ENCODE measurements at regions of chr12 and their contacts with region 1.

Region 1: DNA sequence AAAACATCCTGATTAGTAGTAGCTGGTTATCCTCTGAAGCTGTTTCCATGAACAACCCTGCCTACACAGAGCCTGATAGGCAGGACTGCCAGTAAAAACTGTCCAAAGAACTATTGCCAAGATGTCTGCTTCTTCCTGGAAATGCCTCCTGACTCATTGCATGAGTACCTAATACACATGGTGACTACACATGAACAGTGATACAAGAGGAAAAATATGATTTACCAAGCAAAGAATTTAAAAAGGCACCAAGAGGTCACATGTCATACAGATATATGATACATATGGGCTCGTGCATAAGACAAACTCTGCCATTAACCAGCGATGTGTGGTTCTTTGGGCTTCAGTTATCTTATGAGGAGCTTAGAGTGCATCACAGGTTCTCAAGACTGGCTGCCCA is 552.3 kb downstream of the SLC16A7 start:
- DNase-seq: peak; percentile 80
- H3K4me3 ChIP-seq: no peak overlapping the region
- H3K27ac ChIP-seq: peak overlapping the region; percentile 86
- H3K4me1 ChIP-seq: peaks cover 26% of the 10 kb centered on the region
- H3K27me3 ChIP-seq: no peaks in the 10 kb centered on the region
- CTCF ChIP-seq: no peak

Region 2: DNA sequence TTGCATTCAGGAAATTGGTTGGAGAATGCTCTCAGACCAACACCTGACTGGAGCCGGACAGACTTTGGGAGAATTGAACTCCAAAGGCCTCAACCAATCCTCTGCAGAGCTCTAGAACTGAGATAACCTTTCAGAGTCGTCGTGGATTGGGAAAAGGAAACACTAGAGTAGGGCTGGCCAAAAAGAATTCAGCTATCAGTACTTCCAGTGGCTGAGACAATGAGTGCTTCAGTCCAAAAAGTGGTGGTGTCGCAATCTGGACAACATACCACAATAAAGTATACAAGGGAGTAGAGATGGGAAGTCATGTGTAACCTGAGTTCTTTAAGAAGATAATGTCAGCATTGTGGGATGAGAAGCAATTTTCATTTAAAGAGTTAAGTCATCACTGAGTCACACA is 175.2 kb before region 1 on chr12:
- CTCF ChIA-PET with region 1: no interaction called
- dilution Hi-C with region 1: no loop called
- in situ Hi-C with region 1: no loop called
- intact Hi-C with region 1: loop called (anchors 1 kb)
- DNase-seq: peak; percentile 90
- H3K4me3 ChIP-seq: peak overlapping the region in 2 of 3 experiments; percentile 2 to 4
- H3K27ac ChIP-seq: peak overlapping the region; percentile 80
- H3K4me1 ChIP-seq: peaks cover 20% of the 10 kb centered on the region
- H3K27me3 ChIP-seq: no peaks in the 10 kb centered on the region
- CTCF ChIP-seq: no peak

Region 3: GRCh38 chr12:60194678-60195077 is 46.6 kb after region 1 on chr12:
- CTCF ChIA-PET with region 1: no interaction called
- dilution Hi-C with region 1: no loop called
- in situ Hi-C with region 1: no loop called
- intact Hi-C with region 1: loop called (anchors 5 kb)
- DNase-seq: peak; percentile 35
- H3K4me3 ChIP-seq: no peak overlapping the region
- H3K27ac ChIP-seq: no peak overlapping the region
- H3K4me1 ChIP-seq: peaks cover 2% of the 10 kb centered on the region
- H3K27me3 ChIP-seq: no peaks in the 10 kb centered on the region
- CTCF ChIP-seq: no peak

Region 4: GRCh38 chr12:60263146-60263545 is 115.0 kb after region 1 on chr12:
- CTCF ChIA-PET with region 1: no interaction called
- dilution Hi-C with region 1: no loop called
- in situ Hi-C with region 1: no loop called
- intact Hi-C with region 1: no loop called
- DNase-seq: no peak
- H3K4me3 ChIP-seq: no peak overlapping the region
- H3K27ac ChIP-seq: no peak overlapping the region
- H3K4me1 ChIP-seq: no peaks in the 10 kb centered on the region
- H3K27me3 ChIP-seq: no peaks in the 10 kb centered on the region
- CTCF ChIP-seq: no peak

Region 5: DNA sequence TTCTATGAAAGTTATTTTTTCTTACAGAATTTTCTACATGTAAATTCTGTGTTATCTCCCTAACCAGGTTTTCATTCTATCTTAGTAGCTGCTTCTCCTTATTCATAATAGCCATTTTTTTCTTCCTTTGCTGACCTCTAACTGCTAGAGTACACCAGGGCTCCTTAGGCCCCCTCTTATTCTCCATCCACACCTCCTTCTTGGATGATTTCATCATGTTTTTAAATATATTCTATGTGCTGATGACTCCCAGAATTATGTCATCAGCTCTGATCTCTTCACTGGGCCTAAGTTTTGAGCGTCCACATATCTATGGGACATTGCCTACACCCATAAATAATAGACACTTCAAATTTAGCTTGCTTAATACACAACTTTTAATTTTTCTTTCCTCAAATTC is 169.3 kb after region 1 on chr12:
- CTCF ChIA-PET with region 1: no interaction called
- dilution Hi-C with region 1: no loop called
- in situ Hi-C with region 1: no loop called
- intact Hi-C with region 1: no loop called
- DNase-seq: no peak
- H3K4me3 ChIP-seq: no peak overlapping the region
- H3K27ac ChIP-seq: no peak overlapping the region
- H3K4me1 ChIP-seq: no peaks in the 10 kb centered on the region
- H3K27me3 ChIP-seq: no peaks in the 10 kb centered on the region
- CTCF ChIP-seq: no peak